ENCODE measurements at regions of chrX and their contacts with region 1.

Region 1: GRCh38 chrX:50877370-50877769 is 33.2 kb upstream of the BMP15 start:
- DNase-seq: no peak
- H3K4me3 ChIP-seq: no peak overlapping the region
- H3K27ac ChIP-seq: no peak overlapping the region
- H3K4me1 ChIP-seq: no peaks in the 10 kb centered on the region
- H3K27me3 ChIP-seq: no peaks in the 10 kb centered on the region
- CTCF ChIP-seq: no peak
- EP300 ChIP-seq: no peak
- POLR2A ChIP-seq: no peak

Region 2: DNA sequence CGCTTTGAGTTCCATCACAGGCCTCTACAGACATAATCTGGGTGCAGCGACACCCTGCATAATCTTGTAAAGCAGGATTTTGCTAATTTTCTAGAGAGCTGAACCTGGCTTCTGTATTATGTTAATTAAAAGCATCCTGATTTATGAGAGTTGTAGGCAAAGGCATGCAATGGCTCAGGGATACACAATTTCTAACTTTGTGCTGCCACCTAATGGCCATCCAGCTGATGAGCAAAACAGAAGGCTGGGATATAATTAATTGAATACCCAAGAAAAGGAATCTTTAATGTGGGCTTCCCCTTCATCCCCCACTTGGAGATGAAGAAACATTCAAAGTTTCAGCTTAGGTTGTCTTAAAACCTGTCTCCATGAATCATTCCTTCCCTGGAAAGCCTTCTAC is 111.3 kb after region 1 on chrX:
- in situ Hi-C with region 1: loop called in 1 of 4 experiments (anchors 25 kb)
- intact Hi-C with region 1: no loop called
- DNase-seq: no peak
- H3K4me3 ChIP-seq: no peak overlapping the region
- H3K27ac ChIP-seq: no peak overlapping the region
- H3K4me1 ChIP-seq: no peaks in the 10 kb centered on the region
- H3K27me3 ChIP-seq: no peaks in the 10 kb centered on the region
- CTCF ChIP-seq: peak in 2 of 5 experiments; percentile 31 to 36
- EP300 ChIP-seq: no peak
- POLR2A ChIP-seq: no peak

Region 3: DNA sequence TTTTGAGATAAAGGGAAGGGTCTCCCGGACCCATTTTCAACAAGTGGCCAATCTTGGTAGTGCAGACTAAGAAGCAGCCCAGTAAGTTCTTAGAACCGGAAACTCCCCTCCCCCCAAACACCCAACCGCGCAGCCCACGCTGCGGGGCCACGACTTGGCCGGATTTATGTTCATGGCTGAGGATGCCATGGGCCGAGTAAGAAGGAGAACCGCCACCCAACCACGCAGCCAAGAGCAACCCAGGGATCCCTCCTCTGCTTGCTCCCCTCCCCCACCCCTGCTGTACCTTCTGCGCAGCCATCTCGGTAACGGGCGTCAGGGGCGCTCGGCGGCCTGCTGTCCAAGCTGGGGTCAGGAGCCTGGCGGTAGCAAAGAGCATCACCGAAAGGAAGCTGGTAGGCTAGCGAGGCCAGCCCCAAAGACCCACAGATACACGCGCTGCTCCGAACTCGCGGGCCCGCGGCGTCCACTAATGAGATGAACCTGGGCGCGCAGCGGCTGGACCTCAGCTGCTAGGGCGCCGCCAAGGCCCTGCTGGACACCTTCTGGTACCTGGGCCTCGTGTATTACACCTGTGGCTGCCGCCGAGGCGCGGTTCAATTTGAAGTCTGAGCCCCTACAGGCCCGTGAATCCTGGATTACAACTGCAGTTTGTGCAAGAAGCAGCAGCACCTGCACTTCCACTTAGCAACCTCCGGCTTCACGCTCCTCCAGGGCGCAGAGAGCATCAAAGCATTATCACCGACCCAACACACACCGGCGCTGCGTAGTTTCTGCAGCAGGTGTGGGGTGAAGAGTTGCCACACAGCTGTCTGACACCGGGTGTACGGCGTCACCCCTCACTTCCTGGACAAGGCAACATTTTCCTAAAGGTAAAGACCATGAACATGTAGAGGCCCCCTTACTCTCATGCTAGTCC is 518.7 kb after region 1 on chrX:
- in situ Hi-C with region 1: no loop called
- intact Hi-C with region 1: no loop called
- DNase-seq: no peak
- H3K4me3 ChIP-seq: peak overlapping the region; percentile 18 to 50 (median 24)
- H3K27ac ChIP-seq: peak overlapping the region in 1 of 4 donors; percentile 16
- H3K4me1 ChIP-seq: no peaks in the 10 kb centered on the region
- H3K27me3 ChIP-seq: no peaks in the 10 kb centered on the region
- CTCF ChIP-seq: peak in 2 of 5 experiments; percentile 14 to 21
- EP300 ChIP-seq: no peak
- POLR2A ChIP-seq: no peak

Measured in transverse colon (tissue), 4 donors.